ENCODE measurements at regions of chr22 and their contacts with region 1.

Region 1: DNA sequence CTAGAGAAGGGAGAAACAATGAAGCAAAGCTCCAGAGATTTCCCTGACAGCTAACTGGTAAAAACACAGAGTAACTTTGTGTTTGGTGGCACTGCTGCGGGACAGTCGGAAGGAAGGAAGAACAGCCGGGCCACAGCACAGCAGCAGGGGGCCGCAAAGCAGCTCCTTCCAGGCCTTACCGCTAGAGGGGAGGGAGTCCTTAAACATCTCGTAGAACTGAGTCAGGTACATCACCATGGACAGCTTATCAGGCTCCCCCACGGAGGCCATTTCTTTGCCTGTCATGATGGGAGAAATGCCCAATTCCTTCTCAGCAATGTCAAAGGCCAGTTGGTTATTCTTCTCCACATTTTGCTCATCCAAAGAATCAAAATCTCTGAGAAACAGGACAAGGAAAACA is 114.6 kb upstream of the BID start:
- DNase-seq: no peak
- H3K4me3 ChIP-seq: no peak overlapping the region
- H3K4me1 ChIP-seq: no peaks in the 10 kb centered on the region
- H3K27me3 ChIP-seq: no peaks in the 10 kb centered on the region

Region 2: GRCh38 chr22:17945888-17946648 is 57.2 kb after region 1 on chr22:
- in situ Hi-C with region 1: loop called (anchors 10 kb)
- DNase-seq: no peak
- H3K4me3 ChIP-seq: no peak overlapping the region
- H3K4me1 ChIP-seq: no peaks in the 10 kb centered on the region; the same call in 1 of the 2 replicates
- H3K27me3 ChIP-seq: no peaks in the 10 kb centered on the region